GM10248 (cell line): ENCODE measurements at regions of chr11 and their contacts with region 1.

Region 1: DNA sequence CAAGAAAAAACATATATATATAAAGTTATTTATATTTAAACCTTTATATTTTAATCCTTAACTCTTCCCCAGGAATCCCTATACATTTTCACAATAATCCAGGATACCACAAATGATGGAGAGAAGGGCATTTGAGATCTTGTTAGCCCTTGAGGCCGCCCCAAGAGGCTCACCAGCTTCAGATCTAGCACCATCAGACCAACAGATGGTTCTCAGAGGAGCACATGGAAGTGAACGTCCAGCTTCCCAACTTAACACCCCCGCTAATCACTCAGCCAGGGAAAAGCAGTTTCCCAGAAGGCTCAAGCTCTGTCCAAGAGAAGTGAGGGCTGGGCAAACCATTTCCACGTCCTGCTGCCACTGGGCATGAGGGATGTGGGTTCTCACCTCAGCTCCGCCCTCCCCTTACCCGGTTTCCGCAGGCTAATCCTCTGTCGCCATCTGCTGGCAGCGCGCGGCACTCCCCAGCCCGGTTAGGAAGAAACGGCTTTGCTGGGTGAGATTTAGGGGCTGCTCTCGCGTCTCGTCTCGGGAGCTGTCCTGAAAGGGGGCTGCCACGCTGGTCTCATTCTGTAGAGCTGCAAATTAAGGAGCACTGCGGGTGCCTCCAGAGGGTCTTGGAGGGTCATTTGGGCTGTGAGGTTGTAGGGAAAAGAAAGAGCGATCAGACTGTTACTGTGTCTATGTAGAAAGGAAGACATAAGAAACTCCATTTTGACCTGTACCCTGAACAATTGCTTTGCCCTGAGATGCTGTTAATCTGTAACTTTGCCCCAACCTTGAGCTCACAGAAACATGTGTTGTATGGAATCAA is 6.8 kb upstream of the FAM111A start:
- DNase-seq: peak; percentile 83
- CTCF ChIP-seq: peak; percentile 100

Region 2: GRCh38 chr11:58444300-58444699 is 691.6 kb before region 1 on chr11:
- CTCF ChIA-PET with region 1: no interaction called
- POLR2A ChIA-PET with region 1: no interaction called
- DNase-seq: no peak
- CTCF ChIP-seq: no peak

Region 3: DNA sequence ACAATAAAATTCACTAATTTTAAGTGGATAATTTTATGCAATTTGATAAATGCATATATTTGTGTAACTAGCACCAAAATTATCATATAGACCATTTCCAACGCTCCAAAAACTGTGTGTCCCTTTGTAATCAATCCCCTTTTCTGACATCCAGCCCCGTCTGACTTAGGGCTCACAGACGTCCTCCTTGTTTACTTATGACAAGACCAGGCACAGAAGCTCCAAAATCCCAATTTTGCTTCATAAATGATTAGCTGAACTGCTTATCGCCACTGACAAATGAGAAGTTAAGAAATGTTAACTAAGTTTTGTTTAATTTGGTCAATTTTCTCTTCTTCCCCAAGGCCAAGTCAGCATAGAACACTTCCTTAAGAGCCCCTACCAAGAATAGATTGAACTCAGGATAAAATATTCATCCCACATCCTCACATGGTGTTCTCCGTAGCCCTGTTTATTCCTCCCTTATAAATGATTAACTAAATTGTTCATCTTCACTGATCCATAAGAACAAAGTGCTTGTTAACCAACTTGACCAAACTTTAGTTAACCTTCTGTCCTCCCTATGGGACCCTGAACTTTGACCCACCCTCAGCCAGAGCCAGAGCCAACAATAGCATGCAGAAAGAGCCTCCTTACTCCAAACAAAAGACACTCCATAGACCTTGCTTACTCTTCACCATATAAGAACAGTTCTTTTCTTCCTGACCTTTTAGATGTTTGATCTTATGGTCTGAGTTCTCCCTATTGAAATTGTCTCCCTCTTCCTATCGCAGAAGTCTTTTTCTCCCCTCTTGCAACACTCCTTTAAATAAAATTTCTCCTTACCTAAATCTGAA is 373.4 kb before region 1 on chr11:
- CTCF ChIA-PET with region 1: no interaction called
- POLR2A ChIA-PET with region 1: no interaction called
- DNase-seq: no peak
- CTCF ChIP-seq: no peak

Region 4: GRCh38 chr11:58958500-58958899 is 177.4 kb before region 1 on chr11:
- CTCF ChIA-PET with region 1: interaction called, 17 read pairs
- POLR2A ChIA-PET with region 1: no interaction called
- DNase-seq: peak; percentile 50
- CTCF ChIP-seq: peak; percentile 42

Region 5: GRCh38 chr11:59062602-59063529 is 73.0 kb before region 1 on chr11:
- CTCF ChIA-PET with region 1: interaction called, 27 read pairs
- POLR2A ChIA-PET with region 1: no interaction called
- DNase-seq: no peak
- CTCF ChIP-seq: no peak

Region 6: GRCh38 chr11:59106363-59107336 is 29.2 kb before region 1 on chr11 and contains the start of gene FAM111B:
- CTCF ChIA-PET with region 1: interaction called, 48 read pairs
- POLR2A ChIA-PET with region 1: interaction called, 4 read pairs
- DNase-seq: peak; percentile 83
- CTCF ChIP-seq: peak; percentile 13

Region 7: DNA sequence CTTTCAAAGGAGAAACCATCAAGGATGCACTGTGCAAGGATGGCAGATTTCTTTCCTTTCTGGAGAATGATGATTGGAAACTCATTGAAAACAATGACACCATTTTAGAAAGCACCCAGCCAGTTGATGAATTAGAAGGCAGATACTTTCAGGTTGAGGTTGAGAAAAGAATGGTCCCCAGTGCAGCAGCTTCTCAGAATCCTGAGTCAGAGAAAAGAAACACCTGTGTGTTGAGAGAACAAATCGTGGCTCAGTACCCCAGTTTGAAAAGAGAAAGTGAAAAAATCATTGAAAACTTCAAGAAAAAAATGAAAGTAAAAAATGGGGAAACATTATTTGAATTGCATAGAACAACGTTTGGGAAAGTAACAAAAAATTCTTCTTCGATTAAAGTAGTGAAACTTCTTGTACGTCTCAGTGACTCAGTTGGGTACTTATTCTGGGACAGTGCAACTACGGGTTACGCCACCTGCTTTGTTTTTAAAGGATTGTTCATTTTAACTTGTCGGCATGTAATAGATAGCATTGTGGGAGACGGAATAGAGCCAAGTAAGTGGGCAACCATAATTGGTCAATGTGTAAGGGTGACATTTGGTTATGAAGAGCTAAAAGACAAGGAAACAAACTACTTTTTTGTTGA is 16.6 kb after region 1 on chr11:
- CTCF ChIA-PET with region 1: interaction called, 37 read pairs
- POLR2A ChIA-PET with region 1: no interaction called
- DNase-seq: peak; percentile 48
- CTCF ChIP-seq: no peak